GM23248 (cell line): ENCODE measurements at regions of chr4 and their contacts with region 1.

Region 1: DNA sequence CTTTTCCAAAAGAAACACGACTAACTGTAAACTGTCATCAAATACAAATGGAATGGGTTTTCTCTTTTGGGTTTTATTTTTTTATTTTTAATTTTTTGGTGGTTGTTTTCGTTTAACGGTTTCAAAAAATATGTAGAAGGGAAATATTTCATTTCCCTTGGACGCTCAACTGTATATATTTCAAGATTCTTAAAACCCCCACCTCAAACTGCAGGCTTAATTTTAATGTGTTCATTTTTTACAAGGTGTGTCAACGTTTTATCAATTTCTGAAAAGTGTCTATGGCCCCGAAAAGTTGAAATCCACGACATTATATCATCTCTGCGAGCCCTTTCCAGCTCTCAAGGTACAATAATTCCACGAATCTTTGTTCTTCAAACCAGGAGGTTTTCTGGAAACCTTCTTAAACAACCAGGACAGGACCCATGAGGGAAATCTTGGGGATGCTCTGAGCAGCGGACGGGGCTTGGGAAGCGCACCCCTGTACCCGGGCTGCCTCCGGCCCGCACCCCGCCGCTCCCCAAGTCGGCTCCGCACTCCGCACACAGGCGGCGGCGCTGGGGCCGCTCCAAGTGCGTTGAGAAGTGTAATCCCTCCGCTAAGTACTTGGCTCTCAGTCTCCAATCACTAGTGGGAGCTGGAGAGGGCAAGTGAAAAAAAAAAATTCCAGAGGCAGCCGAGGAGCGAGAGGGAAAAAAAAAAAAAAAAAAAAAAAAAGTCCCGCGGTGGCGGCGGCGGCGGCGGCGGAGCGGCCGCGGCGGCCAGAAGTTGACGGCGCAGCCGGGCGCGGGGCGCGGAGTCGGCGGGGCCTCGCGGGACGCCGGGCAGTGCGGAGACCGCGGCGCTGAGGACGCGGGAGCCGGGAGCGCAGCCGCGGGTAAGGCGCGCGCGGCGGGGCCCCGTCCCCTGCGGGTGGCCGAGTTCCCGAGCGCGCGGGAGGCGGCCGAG is at the start of gene BMPR1B:
- DNase-seq: peak; percentile 82
- H3K4me3 ChIP-seq: peak within 1 kb of the TSS; percentile 81
- H3K27ac ChIP-seq: no peak within 1 kb of the TSS
- H3K4me1 ChIP-seq: no peaks in the 10 kb centered on the region
- H3K27me3 ChIP-seq: peaks cover 17% of the 10 kb centered on the region; the same call in 1 of the 2 replicates
- total RNA-seq, gene BMPR1B: 0.76 TPM in 2 replicates

Region 2: GRCh38 chr4:95049551-95050233 is 292.2 kb after region 1 on chr4:
- in situ Hi-C with region 1: no loop called
- DNase-seq: no peak
- H3K4me3 ChIP-seq: no peak overlapping the region
- H3K27ac ChIP-seq: no peak overlapping the region
- H3K4me1 ChIP-seq: no peaks in the 10 kb centered on the region
- H3K27me3 ChIP-seq: no peaks in the 10 kb centered on the region

Region 3: DNA sequence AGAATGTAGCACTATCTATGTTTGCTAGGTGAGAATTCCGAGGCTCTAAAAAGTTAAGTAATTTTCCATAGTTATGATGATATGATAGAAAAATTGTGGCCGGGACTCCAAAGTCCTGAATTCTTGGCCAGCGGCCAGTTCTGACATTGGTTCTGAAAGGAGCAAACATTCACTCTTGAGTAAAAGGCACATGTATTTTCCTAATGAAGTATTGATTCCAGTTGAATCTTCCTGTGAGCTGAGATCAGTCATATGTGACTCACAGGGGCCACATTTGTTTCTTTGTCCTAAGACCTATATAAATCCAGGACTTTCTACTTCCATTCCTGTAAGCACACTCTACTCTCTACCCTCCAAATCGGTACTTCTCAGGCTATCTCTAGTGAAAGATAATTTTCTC is 350.2 kb after region 1 on chr4:
- in situ Hi-C with region 1: loop called (anchors 10 kb)
- DNase-seq: peak; percentile 68
- H3K4me3 ChIP-seq: no peak overlapping the region
- H3K27ac ChIP-seq: no peak overlapping the region
- H3K4me1 ChIP-seq: peaks cover 26% of the 10 kb centered on the region
- H3K27me3 ChIP-seq: no peaks in the 10 kb centered on the region